Breast epithelium (tissue), 4 donors: ENCODE measurements at regions of chr4 and their contacts with region 1.

Region 1: GRCh38 chr4:24551492-24552289 is 32.7 kb downstream of the DHX15 start:
- DNase-seq: no peak
- H3K4me3 ChIP-seq: no peak overlapping the region
- H3K27ac ChIP-seq: no peak overlapping the region
- H3K4me1 ChIP-seq: no peaks in the 10 kb centered on the region
- H3K27me3 ChIP-seq: no peaks in the 10 kb centered on the region
- CTCF ChIP-seq: no peak
- POLR2A ChIP-seq: no peak

Region 2: DNA sequence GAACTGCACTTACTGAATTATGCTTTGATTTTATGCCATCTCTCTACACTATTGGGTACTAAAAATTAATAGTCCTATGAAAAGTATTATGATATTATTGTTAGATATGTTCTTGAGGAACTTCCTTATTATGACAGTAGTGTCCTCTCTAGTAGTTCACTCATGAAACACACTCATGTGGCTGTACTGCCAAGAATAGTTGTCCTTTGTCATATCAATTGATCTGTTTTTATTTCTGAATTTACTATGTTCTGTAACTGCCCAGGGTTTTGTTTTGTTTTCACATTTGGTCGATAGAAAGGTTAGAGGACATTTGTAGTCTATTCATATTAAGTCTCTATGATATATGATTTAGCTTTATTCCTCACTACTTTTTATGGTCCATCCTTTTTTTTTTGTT is 877.0 kb before region 1 on chr4:
- intact Hi-C with region 1: loop called (anchors 5 kb)
- DNase-seq: no peak
- H3K4me3 ChIP-seq: no peak overlapping the region
- H3K27ac ChIP-seq: no peak overlapping the region
- H3K4me1 ChIP-seq: no peaks in the 10 kb centered on the region
- H3K27me3 ChIP-seq: no peaks in the 10 kb centered on the region
- CTCF ChIP-seq: no peak
- POLR2A ChIP-seq: no peak